ENCODE measurements at regions of chr9 and their contacts with region 1.

Region 1: GRCh38 chr9:134443168-134444037 is 117.1 kb downstream of the RXRA start:
- DNase-seq: peak; percentile 94
- H3K4me3 ChIP-seq: peak overlapping the region in 1 of 2 experiments; percentile 44; a peak in 1 of 4 replicates
- H3K27ac ChIP-seq: no peak overlapping the region
- H3K4me1 ChIP-seq: peaks cover 18 to 20% of the 10 kb centered on the region in 2 experiments; a peak in 2 of 4 replicates
- H3K27me3 ChIP-seq: no peaks in the 10 kb centered on the region
- CTCF ChIP-seq: peak; percentile 97
- EP300 ChIP-seq: no peak; a peak in 1 of 4 replicates
- RAD21 ChIP-seq: peak; percentile 99

Region 2: GRCh38 chr9:134178768-134179551 is 264.4 kb before region 1 on chr9:
- CTCF ChIA-PET with region 1: interaction called, 384 read pairs
- POLR2A ChIA-PET with region 1: no interaction called
- DNase-seq: peak; percentile 54
- H3K4me3 ChIP-seq: no peak overlapping the region
- H3K27ac ChIP-seq: no peak overlapping the region
- H3K4me1 ChIP-seq: peaks cover 0 to 7% of the 10 kb centered on the region in 2 experiments; a peak in 1 of 4 replicates
- H3K27me3 ChIP-seq: peaks cover 7% of the 10 kb centered on the region; the same call in 1 of the 2 replicates
- CTCF ChIP-seq: no peak
- EP300 ChIP-seq: no peak
- RAD21 ChIP-seq: no peak

Region 3: GRCh38 chr9:134333234-134333873 is 110.0 kb before region 1 on chr9:
- CTCF ChIA-PET with region 1: interaction called, 32 read pairs
- POLR2A ChIA-PET with region 1: interaction called, 3 read pairs
- DNase-seq: peak; percentile 85
- H3K4me3 ChIP-seq: no peak overlapping the region
- H3K27ac ChIP-seq: peak overlapping the region in 1 of 2 experiments; percentile 85; a peak in 2 of 4 replicates
- H3K4me1 ChIP-seq: peaks cover 11 to 92% of the 10 kb centered on the region in 2 experiments; a peak in 2 of 4 replicates
- H3K27me3 ChIP-seq: no peaks in the 10 kb centered on the region
- CTCF ChIP-seq: no peak
- EP300 ChIP-seq: 0 out of 4 replicates have a peak, but pooled peaks of 1 of the 2 experiments have one; percentile 42
- RAD21 ChIP-seq: no peak

Region 4: GRCh38 chr9:134365791-134366688 is 77.4 kb before region 1 on chr9:
- CTCF ChIA-PET with region 1: interaction called, 31 read pairs
- POLR2A ChIA-PET with region 1: interaction called, 6 read pairs
- DNase-seq: peak; percentile 93
- H3K4me3 ChIP-seq: peak overlapping the region in 1 of 2 experiments; percentile 21; a peak in 3 of 4 replicates
- H3K27ac ChIP-seq: peak overlapping the region; percentile 81 to 98
- H3K4me1 ChIP-seq: peaks cover 39 to 78% of the 10 kb centered on the region in 2 experiments
- H3K27me3 ChIP-seq: no peaks in the 10 kb centered on the region
- CTCF ChIP-seq: 0 out of 2 replicates have a peak, but pooled peaks have one; percentile 8
- EP300 ChIP-seq: peak; percentile 33 to 71; a peak in 3 of 4 replicates
- RAD21 ChIP-seq: peak; percentile 42

Region 5: DNA sequence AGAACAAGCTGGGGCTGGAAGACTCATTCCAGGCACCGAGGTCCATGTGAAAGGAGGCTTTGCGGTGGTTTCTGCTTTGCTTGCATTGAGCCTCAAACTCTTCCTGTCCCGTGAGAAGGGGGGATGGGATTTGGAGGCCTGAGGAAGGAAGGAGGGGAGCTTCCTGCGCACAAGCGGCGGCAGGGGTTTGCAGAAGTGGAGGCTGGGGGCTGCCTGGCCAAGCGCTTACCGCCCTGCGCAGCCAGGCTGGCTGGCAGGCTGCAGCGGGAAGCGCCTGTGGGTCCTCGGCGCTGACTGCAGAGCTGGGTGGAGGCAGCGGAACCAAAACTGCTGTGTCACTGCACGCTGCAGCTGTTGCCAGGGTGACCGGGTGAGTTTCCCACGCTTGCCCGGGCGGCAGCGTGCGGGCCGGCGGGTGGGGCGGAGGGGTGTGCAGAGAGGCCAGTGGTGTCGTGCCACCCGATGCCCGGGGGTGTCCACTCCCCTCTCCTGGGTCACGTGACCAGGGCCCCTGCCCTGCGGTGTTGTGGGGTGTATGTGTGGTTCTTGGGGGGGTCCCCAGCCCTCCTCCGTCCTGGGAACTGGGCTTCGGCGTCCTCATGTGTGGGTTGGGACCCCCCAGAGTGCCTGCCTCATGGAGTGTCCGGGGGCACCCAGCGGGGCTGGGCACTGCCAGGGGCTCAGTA is 36.1 kb before region 1 on chr9:
- CTCF ChIA-PET with region 1: interaction called, 21 read pairs
- POLR2A ChIA-PET with region 1: no interaction called
- DNase-seq: peak; percentile 97
- H3K4me3 ChIP-seq: peak overlapping the region; percentile 37 to 44
- H3K27ac ChIP-seq: peak overlapping the region; percentile 70 to 95
- H3K4me1 ChIP-seq: peaks cover 27 to 44% of the 10 kb centered on the region in 2 experiments
- H3K27me3 ChIP-seq: no peaks in the 10 kb centered on the region
- CTCF ChIP-seq: no peak
- EP300 ChIP-seq: peak in 1 of 2 experiments; percentile 37; a peak in 1 of 4 replicates
- RAD21 ChIP-seq: no peak

Region 6: GRCh38 chr9:134458207-134458845 is 14.9 kb after region 1 on chr9:
- CTCF ChIA-PET with region 1: interaction called, 30 read pairs
- POLR2A ChIA-PET with region 1: no interaction called
- DNase-seq: no peak
- H3K4me3 ChIP-seq: no peak overlapping the region
- H3K27ac ChIP-seq: peak overlapping the region in 1 of 2 experiments; percentile 47; a peak in 2 of 4 replicates
- H3K4me1 ChIP-seq: peaks cover 17 to 19% of the 10 kb centered on the region in 2 experiments; a peak in 3 of 4 replicates
- H3K27me3 ChIP-seq: no peaks in the 10 kb centered on the region; the same call in 1 of the 2 replicates
- CTCF ChIP-seq: no peak
- EP300 ChIP-seq: no peak
- RAD21 ChIP-seq: no peak

Measured in SK-N-SH (cell line).